ENCODE measurements at regions of chrX and their contacts with region 1.

Region 1: GRCh38 chrX:65595460-65595876 is 60.9 kb upstream of the LAS1L start:
- DNase-seq: peak; percentile 64
- H3K4me3 ChIP-seq: no peak overlapping the region
- CTCF ChIP-seq: peak; percentile 95

Region 2: GRCh38 chrX:65609237-65609636 is 13.8 kb after region 1 on chrX:
- CTCF ChIA-PET with region 1: interaction called, 7 read pairs
- POLR2A ChIA-PET with region 1: interaction called, 11 read pairs
- DNase-seq: no peak
- H3K4me3 ChIP-seq: no peak overlapping the region
- CTCF ChIP-seq: no peak

Region 3: GRCh38 chrX:65705439-65705838 is 110.0 kb after region 1 on chrX:
- CTCF ChIA-PET with region 1: interaction called, 18 read pairs
- POLR2A ChIA-PET with region 1: no interaction called
- DNase-seq: no peak
- H3K4me3 ChIP-seq: no peak overlapping the region
- CTCF ChIP-seq: no peak